Left ventricle myocardium superior (tissue), 1 donor: ENCODE measurements at regions of chr2 and their contacts with region 1.

Region 1: GRCh38 chr2:75608684-75609333 is 37.8 kb upstream of the MRPL19 start:
- DNase-seq: peak; percentile 70
- ATAC-seq: peak; percentile 89

Region 2: DNA sequence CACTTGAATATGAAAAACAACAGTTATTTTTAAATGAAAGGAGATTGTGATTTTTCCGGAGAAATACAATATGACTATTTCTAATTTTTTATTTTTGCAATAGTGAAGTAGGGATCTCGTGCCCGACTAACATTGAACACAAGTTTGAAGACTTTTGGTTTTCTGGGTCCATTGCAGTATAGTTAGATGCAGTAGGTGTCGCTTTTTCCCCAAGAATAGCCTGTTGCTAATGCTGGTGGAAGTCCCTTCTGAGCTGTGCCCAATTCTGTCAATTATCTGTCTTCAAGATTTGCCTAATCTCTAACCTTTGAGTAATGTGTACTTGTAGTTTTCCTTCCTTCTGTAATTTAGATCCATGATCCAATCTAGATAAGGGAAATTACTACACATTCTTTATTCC is 918.2 kb before region 1 on chr2:
- intact Hi-C with region 1: no loop called
- DNase-seq: no peak
- ATAC-seq: peak; percentile 65

Region 3: GRCh38 chr2:75390169-75390568 is 218.6 kb before region 1 on chr2:
- intact Hi-C with region 1: no loop called
- DNase-seq: no peak
- ATAC-seq: no peak

Region 4: DNA sequence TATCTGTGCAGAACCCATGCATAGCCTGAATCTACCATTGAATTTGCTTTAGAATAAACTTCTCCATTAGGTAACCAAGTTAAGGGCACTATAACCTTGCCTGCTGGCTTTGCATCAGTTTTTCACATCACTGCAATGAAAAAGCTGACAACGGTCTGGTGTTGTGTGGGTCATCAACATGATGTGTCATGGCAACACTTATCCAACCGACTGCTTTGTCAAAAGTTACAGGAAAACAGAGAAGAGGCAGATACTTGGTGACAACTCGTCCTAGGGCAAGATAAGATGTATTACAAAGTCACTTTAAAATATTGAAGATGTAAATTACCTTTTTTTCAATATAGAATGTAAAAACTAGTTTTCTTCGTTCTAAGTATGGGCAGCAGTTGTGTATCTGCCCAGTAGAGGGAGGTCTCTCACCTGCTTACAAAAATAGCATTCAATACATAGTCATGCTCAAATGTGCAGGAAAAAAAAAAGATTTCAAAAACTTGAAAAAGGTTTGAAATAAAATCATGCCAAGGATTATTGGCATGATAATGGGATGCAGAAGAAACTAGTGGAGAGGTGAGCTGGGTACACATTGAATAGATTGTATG is 144.4 kb before region 1 on chr2:
- intact Hi-C with region 1: loop called (anchors 2 kb)
- DNase-seq: no peak
- ATAC-seq: no peak